ENCODE measurements at regions of chr9 and their contacts with region 1.

Region 1: DNA sequence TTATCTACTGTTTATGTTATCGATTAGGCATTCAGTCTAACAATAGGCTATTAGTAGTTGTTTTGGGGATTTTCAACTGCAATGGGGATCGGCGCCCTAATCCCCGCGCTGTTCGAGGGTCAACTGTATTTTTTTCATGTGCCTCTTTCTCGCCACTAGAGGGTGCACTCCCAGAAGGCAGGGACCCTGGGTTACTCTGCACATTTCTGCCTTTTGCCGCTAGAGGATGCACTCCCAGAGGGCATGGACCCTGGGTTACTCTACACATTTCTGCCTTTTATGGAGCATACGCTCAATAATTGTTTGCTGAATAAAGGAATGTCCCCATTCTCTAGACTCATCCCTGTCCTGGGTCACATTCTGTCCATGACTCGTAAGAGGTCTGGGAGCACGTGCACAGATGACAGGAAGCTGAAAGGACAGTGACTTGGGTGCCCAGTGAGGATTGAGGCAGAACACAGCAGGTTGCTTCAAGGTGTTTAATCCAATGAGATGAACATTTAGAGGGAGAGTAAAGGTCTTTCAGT is 27.9 kb upstream of the RECK start:
- DNase-seq: peak; percentile 82
- ATAC-seq: peak; percentile 98
- H3K4me3 Mint-ChIP-seq: no peak overlapping the region
- H3K27ac Mint-ChIP-seq: no peak overlapping the region
- H3K4me1 Mint-ChIP-seq: peaks cover 19% of the 10 kb centered on the region
- H3K27me3 Mint-ChIP-seq: peaks cover 54% of the 10 kb centered on the region

Region 2: GRCh38 chr9:35954942-35955546 is 53.8 kb before region 1 on chr9:
- CTCF ChIA-PET with region 1: interaction called, 14 read pairs
- DNase-seq: peak; percentile 68
- ATAC-seq: peak; percentile 68
- H3K4me3 Mint-ChIP-seq: no peak overlapping the region
- H3K27ac Mint-ChIP-seq: no peak overlapping the region
- H3K4me1 Mint-ChIP-seq: no peaks in the 10 kb centered on the region
- H3K27me3 Mint-ChIP-seq: peaks cover 48% of the 10 kb centered on the region

Region 3: DNA sequence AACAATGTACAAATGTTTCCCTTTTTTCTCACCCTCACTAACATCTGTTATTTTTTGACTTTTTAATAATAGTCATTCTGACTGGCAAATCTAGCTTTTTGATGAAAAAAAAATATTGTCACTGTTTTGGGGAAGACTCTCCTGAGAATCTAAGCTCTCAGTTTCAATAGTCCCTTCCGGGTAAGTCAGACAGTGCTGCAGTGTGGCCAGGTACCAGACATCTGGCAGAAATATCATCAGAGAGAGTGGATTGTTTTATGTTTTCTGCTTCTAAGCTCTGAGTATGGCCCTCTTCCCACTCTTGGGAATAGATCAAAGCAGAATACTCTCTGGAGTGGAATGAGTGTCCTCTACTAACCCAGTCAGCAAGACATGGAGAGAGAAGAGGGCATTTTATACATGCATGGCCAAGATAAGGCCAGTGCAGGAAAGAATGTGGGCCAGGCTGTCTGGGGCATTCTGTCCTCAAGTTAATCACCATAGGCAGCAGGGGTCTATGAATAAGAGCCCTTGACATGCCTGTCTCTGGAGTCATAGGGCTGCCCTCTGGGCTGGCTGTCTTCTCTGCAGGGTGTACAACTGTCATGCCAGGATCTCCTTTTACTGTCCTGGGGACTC is 12.4 kb before region 1 on chr9:
- CTCF ChIA-PET with region 1: interaction called, 12 read pairs
- DNase-seq: no peak
- ATAC-seq: no peak
- H3K4me3 Mint-ChIP-seq: no peak overlapping the region
- H3K27ac Mint-ChIP-seq: no peak overlapping the region
- H3K4me1 Mint-ChIP-seq: no peaks in the 10 kb centered on the region
- H3K27me3 Mint-ChIP-seq: peaks cover 46% of the 10 kb centered on the region

Region 4: GRCh38 chr9:36023260-36024048 is 14.6 kb after region 1 on chr9:
- CTCF ChIA-PET with region 1: interaction called, 59 read pairs
- DNase-seq: peak; percentile 79
- ATAC-seq: peak; percentile 78
- H3K4me3 Mint-ChIP-seq: no peak overlapping the region
- H3K27ac Mint-ChIP-seq: no peak overlapping the region
- H3K4me1 Mint-ChIP-seq: no peaks in the 10 kb centered on the region
- H3K27me3 Mint-ChIP-seq: peaks cover 4% of the 10 kb centered on the region

Measured in activated CD8-positive, alpha-beta memory T cell treated with anti-CD3 and anti-CD28 coated beads, Interleukin-2, amount 10 ng/mL, durations not matched to agents 7 days and 5 days (primary cell).